Panc1 (cell line): ENCODE measurements at regions of chr15 and their contacts with region 1.

Region 1: DNA sequence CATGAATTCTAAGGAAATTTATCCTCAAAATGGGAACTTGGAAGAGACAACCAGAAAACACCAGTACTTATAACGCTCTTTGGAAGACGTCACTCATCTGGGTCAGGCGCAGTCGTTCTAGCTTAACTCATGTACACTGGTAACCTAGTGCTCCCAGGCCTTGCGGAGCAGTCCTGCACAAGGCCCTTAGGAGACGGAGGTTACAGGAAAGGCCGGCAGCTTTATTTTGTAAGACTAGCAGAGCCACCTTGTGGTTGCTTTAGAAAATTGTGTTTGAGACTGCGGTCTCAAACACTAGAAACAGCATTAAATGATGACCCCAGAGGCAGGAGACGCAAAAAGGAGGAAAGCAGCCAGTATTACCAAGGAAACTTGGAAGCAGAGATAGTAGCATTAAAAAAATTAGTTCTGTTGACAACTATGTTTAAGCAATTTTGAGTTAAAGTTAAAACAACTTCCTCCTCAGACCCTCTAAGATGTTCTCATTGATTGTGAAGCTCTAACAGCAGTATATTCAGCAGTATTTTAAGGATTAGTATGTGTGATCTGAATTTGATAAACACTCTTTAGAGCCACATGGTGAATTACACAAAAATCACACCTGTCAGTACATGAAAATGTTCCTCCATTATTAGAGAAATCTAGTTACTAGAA is 141.9 kb upstream of the C2CD4B start:
- DNase-seq: peak; percentile 25
- ATAC-seq: peak; percentile 99
- H3K4me3 ChIP-seq: no peak overlapping the region
- H3K27ac ChIP-seq: no peak overlapping the region
- H3K4me1 ChIP-seq: no peaks in the 10 kb centered on the region
- H3K27me3 ChIP-seq: peaks cover 2% of the 10 kb centered on the region; the same call in 1 of the 2 replicates
- CTCF ChIP-seq: peak; percentile 82

Region 2: GRCh38 chr15:62071711-62072308 is 235.2 kb before region 1 on chr15:
- CTCF ChIA-PET with region 1: interaction called, 3 read pairs
- POLR2A ChIA-PET with region 1: no interaction called
- in situ Hi-C with region 1: no loop called
- intact Hi-C with region 1: loop called (anchors 5 kb)
- DNase-seq: no peak
- ATAC-seq: no peak
- H3K4me3 ChIP-seq: no peak overlapping the region
- H3K27ac ChIP-seq: no peak overlapping the region
- H3K4me1 ChIP-seq: peaks cover 7% of the 10 kb centered on the region
- H3K27me3 ChIP-seq: 0 out of 2 replicates have a peak, but pooled peaks cover 2% of the 10 kb centered on the region
- CTCF ChIP-seq: peak; percentile 75; the same call in 1 of the 2 replicates